HCT116 (cell line): ENCODE measurements at regions of chr11 and their contacts with region 1.

Region 1: GRCh38 chr11:60831143-60831500 is 10.8 kb upstream of the CCDC86 start:
- DNase-seq: peak; percentile 68
- ATAC-seq: peak; percentile 98
- H3K4me3 ChIP-seq: peak overlapping the region; percentile 4 to 13; a peak in 2 of 4 replicates
- H3K27ac ChIP-seq: no peak overlapping the region
- H3K4me1 ChIP-seq: peaks cover 0 to 5% of the 10 kb centered on the region in 2 experiments; a peak in 2 of 4 replicates
- H3K27me3 ChIP-seq: peaks cover 14% of the 10 kb centered on the region; the same call in 1 of the 2 replicates
- CTCF ChIP-seq: peak; percentile 88 to 98 (median 91)
- POLR2A ChIP-seq: no peak
- RAD21 ChIP-seq: peak; percentile 97

Region 2: GRCh38 chr11:60513496-60514460 is 317.3 kb before region 1 on chr11:
- CTCF ChIA-PET with region 1: no interaction called
- POLR2A ChIA-PET with region 1: no interaction called
- RAD21 ChIA-PET with region 1: no interaction called
- intact Hi-C with region 1: no loop called
- DNase-seq: no peak
- ATAC-seq: no peak
- H3K4me3 ChIP-seq: no peak overlapping the region
- H3K27ac ChIP-seq: no peak overlapping the region
- H3K4me1 ChIP-seq: no peaks in the 10 kb centered on the region
- H3K27me3 ChIP-seq: no peaks in the 10 kb centered on the region
- CTCF ChIP-seq: no peak
- POLR2A ChIP-seq: no peak
- RAD21 ChIP-seq: no peak

Region 3: DNA sequence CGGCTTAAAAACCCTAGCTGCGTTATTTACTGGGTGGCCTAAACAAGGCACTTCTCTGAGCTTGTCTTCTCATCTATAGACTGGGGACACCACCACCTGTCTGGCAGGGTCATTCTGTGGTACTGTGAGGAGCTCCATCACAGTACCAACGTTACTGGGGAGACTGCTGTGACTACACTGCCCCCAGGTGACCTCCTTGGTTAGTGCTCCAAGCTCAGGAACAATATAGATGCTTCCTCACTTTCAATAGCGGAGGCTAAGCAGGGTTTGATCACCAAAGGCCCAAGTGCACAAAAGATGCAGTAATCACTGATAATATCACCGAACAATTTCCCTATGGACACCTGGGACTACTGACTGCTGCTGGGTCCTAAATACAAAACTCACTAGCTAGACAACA is 56.4 kb after region 1 on chr11:
- CTCF ChIA-PET with region 1: interaction called, 86 read pairs
- POLR2A ChIA-PET with region 1: interaction called, 5 read pairs
- RAD21 ChIA-PET with region 1: interaction called, 14 to 21 read pairs
- intact Hi-C with region 1: loop called (anchors 1 kb)
- DNase-seq: peak; percentile 31
- ATAC-seq: peak; percentile 95
- H3K4me3 ChIP-seq: no peak overlapping the region
- H3K27ac ChIP-seq: no peak overlapping the region
- H3K4me1 ChIP-seq: no peaks in the 10 kb centered on the region
- H3K27me3 ChIP-seq: no peaks in the 10 kb centered on the region
- CTCF ChIP-seq: peak; percentile 61; a peak in 5 of 6 replicates
- POLR2A ChIP-seq: no peak
- RAD21 ChIP-seq: peak; percentile 78

Region 4: DNA sequence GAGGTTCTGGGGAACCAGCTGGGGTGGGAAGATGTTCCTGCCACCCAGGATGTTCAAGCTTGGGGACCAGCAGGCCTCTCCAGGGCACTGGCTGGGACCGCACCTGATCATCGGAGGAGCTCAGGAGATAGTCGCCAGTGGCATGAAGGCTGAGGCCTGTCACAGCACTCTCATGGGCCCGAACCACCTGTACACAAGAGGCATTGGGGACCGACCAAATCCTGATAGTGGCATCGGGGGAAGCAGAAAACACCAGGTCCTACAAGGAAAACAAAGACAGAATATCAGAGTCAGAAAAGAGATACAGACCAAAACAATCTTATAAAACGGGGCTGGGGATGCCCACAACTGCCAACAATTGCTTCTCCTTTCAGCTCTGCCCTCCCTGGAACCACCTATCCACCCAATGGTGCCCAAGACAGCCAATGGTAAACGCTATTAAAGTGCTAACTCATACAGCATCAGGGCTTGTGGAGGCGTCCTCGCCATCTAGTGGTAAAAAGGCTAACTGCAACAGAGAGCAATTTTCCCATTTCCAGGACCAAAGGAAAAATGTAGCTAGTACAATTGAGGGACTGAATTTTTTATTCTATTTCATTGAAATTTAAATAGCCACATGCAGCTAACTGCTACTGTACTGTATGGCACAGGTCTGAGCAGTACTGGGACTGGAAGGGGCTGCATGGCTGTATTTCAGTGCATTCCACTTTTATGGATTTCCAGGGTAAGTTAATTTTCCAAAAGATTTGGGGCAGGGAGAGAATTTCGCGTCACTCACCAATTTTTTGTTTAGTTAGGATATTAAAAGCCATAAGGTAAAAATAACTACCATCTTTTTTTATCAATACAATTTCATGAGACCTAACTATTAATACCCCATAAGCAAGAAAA is 68.2 kb after region 1 on chr11:
- CTCF ChIA-PET with region 1: interaction called, 38 read pairs
- POLR2A ChIA-PET with region 1: interaction called, 3 read pairs
- RAD21 ChIA-PET with region 1: interaction called in 1 of 2 experiments, 7 read pairs
- intact Hi-C with region 1: loop called (anchors 1 kb)
- DNase-seq: peak; percentile 51
- ATAC-seq: peak; percentile 95
- H3K4me3 ChIP-seq: no peak overlapping the region
- H3K27ac ChIP-seq: no peak overlapping the region; the same call in 1 of the 2 replicates
- H3K4me1 ChIP-seq: peaks cover 0 to 3% of the 10 kb centered on the region in 2 experiments; a peak in 1 of 4 replicates
- H3K27me3 ChIP-seq: no peaks in the 10 kb centered on the region
- CTCF ChIP-seq: peak; percentile 67 to 93 (median 93); a peak in 5 of 6 replicates
- POLR2A ChIP-seq: no peak
- RAD21 ChIP-seq: peak; percentile 52; the same call in 1 of the 2 replicates

Region 5: GRCh38 chr11:61129639-61130523 is 298.8 kb after region 1 on chr11:
- CTCF ChIA-PET with region 1: interaction called, 3 read pairs
- POLR2A ChIA-PET with region 1: no interaction called
- RAD21 ChIA-PET with region 1: no interaction called
- intact Hi-C with region 1: loop called (anchors 1 kb)
- DNase-seq: peak; percentile 73
- ATAC-seq: peak; percentile 95
- H3K4me3 ChIP-seq: peak overlapping the region in 1 of 2 experiments; percentile 37; a peak in 3 of 4 replicates
- H3K27ac ChIP-seq: peak overlapping the region; percentile 45
- H3K4me1 ChIP-seq: peaks cover 6 to 18% of the 10 kb centered on the region in 2 experiments; a peak in 3 of 4 replicates
- H3K27me3 ChIP-seq: no peaks in the 10 kb centered on the region
- CTCF ChIP-seq: peak; percentile 100
- POLR2A ChIP-seq: no peak
- RAD21 ChIP-seq: peak; percentile 98

Region 6: DNA sequence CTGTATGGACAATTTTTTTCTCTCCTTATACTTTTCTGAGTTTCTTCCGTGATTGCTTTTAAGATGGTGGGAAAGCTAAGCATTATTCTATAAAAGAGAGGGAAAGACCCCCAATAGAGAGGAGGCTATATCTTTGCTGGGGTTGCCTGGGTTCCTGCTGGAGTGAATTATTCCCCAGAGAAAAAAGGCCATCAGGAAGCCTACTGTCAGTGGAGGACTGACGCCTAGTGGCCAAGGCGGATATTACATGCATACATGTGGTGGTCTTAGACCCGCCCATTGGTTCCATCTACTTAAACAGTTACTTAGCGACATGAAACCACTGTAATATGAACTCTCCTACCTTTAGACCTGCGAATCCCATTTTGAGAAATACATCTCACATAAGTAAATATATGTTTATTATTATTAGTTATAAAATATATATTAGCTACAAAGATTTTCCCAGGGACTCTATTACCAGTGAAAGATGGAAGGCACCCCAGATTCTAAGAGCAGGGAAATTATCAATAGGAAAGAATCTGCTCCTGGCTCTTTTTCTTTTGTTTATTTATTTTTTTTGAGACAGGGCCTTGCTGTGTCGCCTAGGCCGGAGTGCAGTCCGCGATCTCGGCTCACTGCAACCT is 356.5 kb after region 1 on chr11:
- CTCF ChIA-PET with region 1: interaction called, 11 read pairs
- POLR2A ChIA-PET with region 1: no interaction called
- RAD21 ChIA-PET with region 1: interaction called in 1 of 2 experiments, 4 read pairs
- intact Hi-C with region 1: loop called (anchors 1 kb)
- DNase-seq: peak; percentile 74
- ATAC-seq: peak; percentile 93
- H3K4me3 ChIP-seq: no peak overlapping the region
- H3K27ac ChIP-seq: no peak overlapping the region
- H3K4me1 ChIP-seq: no peaks in the 10 kb centered on the region
- H3K27me3 ChIP-seq: no peaks in the 10 kb centered on the region
- CTCF ChIP-seq: peak; percentile 88 to 95 (median 93)
- POLR2A ChIP-seq: no peak
- RAD21 ChIP-seq: peak; percentile 95

Region 7: GRCh38 chr11:61384271-61385242 is 553.4 kb after region 1 on chr11:
- CTCF ChIA-PET with region 1: interaction called, 8 read pairs
- POLR2A ChIA-PET with region 1: no interaction called
- RAD21 ChIA-PET with region 1: no interaction called
- intact Hi-C with region 1: loop called (anchors 5 kb)
- DNase-seq: no peak
- ATAC-seq: peak; percentile 31; the same call in 1 of the 2 replicates
- H3K4me3 ChIP-seq: no peak overlapping the region
- H3K27ac ChIP-seq: no peak overlapping the region; the same call in 1 of the 2 replicates
- H3K4me1 ChIP-seq: no peaks in the 10 kb centered on the region
- H3K27me3 ChIP-seq: no peaks in the 10 kb centered on the region
- CTCF ChIP-seq: peak; percentile 3 to 32 (median 20); a peak in 2 of 6 replicates
- POLR2A ChIP-seq: no peak
- RAD21 ChIP-seq: peak; percentile 36

Region 8: DNA sequence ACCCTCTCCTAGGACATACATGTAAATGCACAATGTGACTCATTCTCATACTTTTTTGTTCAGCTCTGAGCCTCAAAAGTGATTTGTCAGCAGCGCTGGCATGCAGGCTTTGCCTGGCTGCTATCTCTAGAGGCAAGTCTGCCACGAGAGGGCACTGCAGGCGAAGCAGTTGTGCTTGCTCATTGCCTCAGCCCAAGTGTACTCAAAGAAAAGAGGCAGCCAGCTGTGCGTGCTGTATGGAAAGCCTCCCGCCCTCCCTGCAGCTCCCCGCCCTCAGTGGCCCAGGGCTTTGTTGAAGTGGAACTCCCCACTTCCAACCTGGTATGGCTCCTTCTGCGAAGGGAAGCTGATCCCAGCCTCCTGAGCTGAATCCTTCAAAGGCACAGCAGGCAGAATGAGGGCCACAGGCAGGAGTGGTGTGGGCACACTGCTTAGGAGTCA is 615.1 kb after region 1 on chr11:
- CTCF ChIA-PET with region 1: no interaction called
- POLR2A ChIA-PET with region 1: no interaction called
- RAD21 ChIA-PET with region 1: no interaction called
- intact Hi-C with region 1: no loop called
- DNase-seq: peak; percentile 73
- ATAC-seq: peak; percentile 98
- H3K4me3 ChIP-seq: no peak overlapping the region
- H3K27ac ChIP-seq: peak overlapping the region; percentile 15; the same call in 1 of the 2 replicates
- H3K4me1 ChIP-seq: peaks cover 0 to 8% of the 10 kb centered on the region in 2 experiments; a peak in 2 of 4 replicates
- H3K27me3 ChIP-seq: no peaks in the 10 kb centered on the region
- CTCF ChIP-seq: peak; percentile 81 to 94 (median 91); a peak in 5 of 6 replicates
- POLR2A ChIP-seq: no peak
- RAD21 ChIP-seq: peak; percentile 84